PC-3 (cell line): ENCODE measurements at regions of chr7 and their contacts with region 1.

Region 1: GRCh38 chr7:2157468-2158279 is 75.1 kb downstream of the MAD1L1 start:
- DNase-seq: peak; percentile 91
- ATAC-seq: peak; percentile 98
- H3K4me3 ChIP-seq: no peak overlapping the region
- H3K27ac ChIP-seq: peak overlapping the region; percentile 60
- H3K4me1 ChIP-seq: peaks cover 19% of the 10 kb centered on the region
- H3K27me3 ChIP-seq: no peaks in the 10 kb centered on the region
- CTCF ChIP-seq: no peak

Region 2: DNA sequence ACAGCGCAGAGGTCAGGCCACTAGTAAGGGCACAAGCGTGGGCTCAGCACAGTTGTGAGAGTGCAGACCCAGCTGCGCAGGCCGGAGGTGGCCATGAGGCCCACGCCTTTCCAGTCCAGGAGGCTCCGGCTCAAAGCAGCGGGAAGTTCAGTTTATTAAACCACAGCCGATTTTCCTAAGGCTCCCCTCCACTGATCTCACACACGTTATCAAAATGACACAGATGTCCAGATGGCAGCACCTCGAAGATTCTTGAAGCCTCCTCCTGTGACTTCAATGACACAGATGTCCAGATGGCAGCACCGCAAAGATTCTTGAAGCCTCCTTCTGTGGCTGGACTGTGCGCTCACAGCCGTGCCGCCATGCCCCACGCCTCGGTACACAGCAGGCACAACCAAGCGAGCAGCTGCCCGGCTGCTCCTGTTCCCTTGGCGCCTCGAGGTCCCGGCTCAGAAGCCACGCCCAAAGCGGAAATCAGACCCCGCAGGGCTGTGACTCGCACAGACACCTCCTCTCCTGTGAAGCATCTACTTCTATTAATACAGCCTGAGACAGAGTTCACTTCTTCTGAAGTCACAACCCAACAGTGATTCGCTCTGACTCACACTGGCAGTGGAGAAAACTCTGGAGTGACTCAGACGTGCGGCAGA is 47.6 kb before region 1 on chr7:
- CTCF ChIA-PET with region 1: interaction called, 4 read pairs
- POLR2A ChIA-PET with region 1: no interaction called
- intact Hi-C with region 1: loop called (anchors 1 kb)
- DNase-seq: peak; percentile 97
- ATAC-seq: peak; percentile 96
- H3K4me3 ChIP-seq: peak overlapping the region; percentile 7
- H3K27ac ChIP-seq: peak overlapping the region; percentile 76
- H3K4me1 ChIP-seq: peaks cover 32% of the 10 kb centered on the region
- H3K27me3 ChIP-seq: no peaks in the 10 kb centered on the region
- CTCF ChIP-seq: no peak

Region 3: DNA sequence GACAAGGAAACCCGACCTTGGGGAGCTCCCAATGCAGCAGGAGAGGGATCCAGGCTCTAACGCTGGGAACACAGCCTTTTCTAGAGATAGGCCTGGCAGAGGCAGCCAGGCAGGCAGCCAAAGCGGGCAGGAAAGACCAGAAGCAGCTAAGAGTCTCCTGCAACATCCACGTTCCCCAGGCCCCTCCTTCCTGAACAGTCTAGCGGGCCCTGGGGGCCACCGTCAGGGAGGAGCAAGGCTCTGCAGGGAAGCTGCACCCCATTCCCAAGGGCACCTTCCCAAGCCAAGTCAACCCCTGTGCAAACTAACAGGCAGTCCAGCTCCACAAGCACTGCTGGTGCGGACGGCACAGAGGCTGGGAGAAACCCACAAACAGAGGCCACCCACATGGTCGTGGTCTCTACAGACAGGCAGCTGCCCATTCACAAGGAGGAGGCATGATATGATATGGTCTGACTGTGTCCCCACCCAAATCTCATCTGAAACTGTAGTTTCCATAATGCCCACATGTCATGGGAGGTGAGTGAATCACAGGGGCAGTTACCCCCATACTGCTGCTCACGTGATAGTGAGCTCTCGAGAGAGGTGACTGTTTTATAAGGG is 40.6 kb before region 1 on chr7:
- CTCF ChIA-PET with region 1: interaction called, 3 read pairs
- POLR2A ChIA-PET with region 1: no interaction called
- intact Hi-C with region 1: loop called (anchors 2 kb)
- DNase-seq: no peak
- ATAC-seq: peak; percentile 37
- H3K4me3 ChIP-seq: 0 out of 2 replicates have a peak overlapping the region, but pooled peaks have one; percentile 10
- H3K27ac ChIP-seq: peak overlapping the region; percentile 70
- H3K4me1 ChIP-seq: peaks cover 33% of the 10 kb centered on the region
- H3K27me3 ChIP-seq: no peaks in the 10 kb centered on the region
- CTCF ChIP-seq: no peak

Region 4: GRCh38 chr7:2175514-2175913 is 17.8 kb after region 1 on chr7:
- CTCF ChIA-PET with region 1: no interaction called
- POLR2A ChIA-PET with region 1: no interaction called
- intact Hi-C with region 1: loop called (anchors 1 kb)
- DNase-seq: peak; percentile 90
- ATAC-seq: peak; percentile 94
- H3K4me3 ChIP-seq: no peak overlapping the region
- H3K27ac ChIP-seq: peak overlapping the region; percentile 57
- H3K4me1 ChIP-seq: peaks cover 29% of the 10 kb centered on the region
- H3K27me3 ChIP-seq: no peaks in the 10 kb centered on the region
- CTCF ChIP-seq: no peak

Region 5: DNA sequence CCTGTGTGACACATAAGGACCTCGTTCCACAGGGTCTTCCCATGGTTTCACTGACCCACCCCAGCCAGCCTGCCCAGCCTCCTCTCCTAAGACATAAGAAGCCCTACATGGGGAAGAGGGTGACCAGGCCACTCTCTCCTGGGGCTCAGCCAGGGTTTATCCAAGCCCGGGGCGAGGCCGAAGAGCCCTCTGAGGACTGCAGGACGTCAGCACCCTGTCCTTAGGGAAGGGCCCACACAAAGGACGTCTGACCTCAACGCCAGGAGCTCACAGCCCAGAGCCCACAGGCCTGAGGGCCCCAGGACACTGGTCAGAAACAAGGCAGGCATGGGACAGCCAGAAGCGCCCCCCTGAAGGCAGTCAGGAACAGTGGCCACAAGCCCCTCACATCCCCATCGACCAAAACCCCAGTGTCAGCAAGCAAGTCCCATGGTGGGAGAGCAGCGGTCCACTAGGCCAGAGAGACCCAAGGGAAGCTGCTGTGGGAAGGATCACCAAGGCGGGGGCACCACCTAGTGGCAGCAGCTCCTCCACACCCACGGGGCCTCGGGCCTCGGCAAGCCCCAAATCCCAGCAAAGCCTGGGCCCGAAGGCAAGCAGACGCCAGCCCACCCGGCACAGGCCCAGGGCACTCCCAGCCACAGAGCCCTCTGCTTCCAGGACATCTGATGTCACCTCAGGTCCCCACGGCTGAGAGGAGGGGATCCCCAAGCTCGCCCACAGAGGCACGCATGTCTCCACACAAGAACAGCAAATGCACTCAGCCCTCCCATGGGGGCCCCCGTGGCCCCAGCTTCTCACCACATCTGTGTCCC is 51.7 kb after region 1 on chr7:
- CTCF ChIA-PET with region 1: no interaction called
- POLR2A ChIA-PET with region 1: no interaction called
- intact Hi-C with region 1: loop called (anchors 5 kb)
- DNase-seq: peak; percentile 31
- ATAC-seq: peak; percentile 69
- H3K4me3 ChIP-seq: no peak overlapping the region
- H3K27ac ChIP-seq: no peak overlapping the region
- H3K4me1 ChIP-seq: no peaks in the 10 kb centered on the region
- H3K27me3 ChIP-seq: no peaks in the 10 kb centered on the region
- CTCF ChIP-seq: peak; percentile 63

Region 6: GRCh38 chr7:2354186-2354938 is 196.7 kb after region 1 on chr7 and contains the start of gene EIF3B:
- CTCF ChIA-PET with region 1: no interaction called
- POLR2A ChIA-PET with region 1: no interaction called
- intact Hi-C with region 1: loop called (anchors 5 kb)
- DNase-seq: peak; percentile 85
- ATAC-seq: peak; percentile 87
- H3K4me3 ChIP-seq: peak within 1 kb of the TSS; percentile 99
- H3K27ac ChIP-seq: peak within 1 kb of the TSS; percentile 94
- H3K4me1 ChIP-seq: peaks cover 25% of the 10 kb centered on the region
- H3K27me3 ChIP-seq: no peaks in the 10 kb centered on the region
- CTCF ChIP-seq: no peak
- total RNA-seq, gene EIF3B: 289 and 377 TPM in 2 replicates